ENCODE measurements at regions of chrX and their contacts with region 1.

Region 1: DNA sequence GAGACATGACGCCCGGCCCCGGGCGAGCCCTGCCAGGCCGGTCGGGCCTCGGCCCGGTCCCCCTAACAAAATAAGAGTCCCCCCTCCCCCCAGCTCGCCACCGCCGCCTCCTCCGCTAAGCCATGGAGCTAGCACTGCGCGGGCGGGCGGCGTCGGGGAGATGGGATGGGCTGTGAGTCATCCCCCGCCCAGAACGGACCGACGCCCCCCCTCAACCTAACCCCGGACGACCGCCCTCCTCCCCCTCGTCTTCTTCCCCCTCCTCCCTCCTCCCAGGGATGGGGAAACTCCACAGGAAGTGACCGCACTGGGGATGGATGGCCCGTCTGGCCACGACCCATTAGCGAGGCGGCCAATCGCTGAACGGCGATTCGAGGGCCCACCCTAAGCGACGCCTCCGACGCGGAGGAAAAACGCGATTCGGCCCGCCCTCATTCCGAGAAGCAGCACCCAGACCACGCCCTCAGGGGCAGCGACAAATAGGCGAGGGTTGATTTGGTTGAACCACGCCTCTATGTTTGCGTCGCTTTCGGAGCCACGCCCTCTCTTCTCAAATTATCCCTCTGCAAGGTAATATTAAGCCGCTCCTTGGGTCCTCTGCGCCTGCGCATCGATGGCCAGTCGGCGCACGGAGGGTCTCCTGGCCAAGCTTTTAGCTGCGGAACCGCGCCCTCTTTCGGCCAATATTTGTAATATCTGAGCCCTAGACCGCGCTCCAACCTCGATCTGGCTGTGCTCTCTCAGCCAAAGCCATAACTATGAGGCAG is at the start of gene TFE3:
- DNase-seq: peak; percentile 98
- H3K4me3 Mint-ChIP-seq: peak within 1 kb of the TSS; percentile 79
- H3K27ac Mint-ChIP-seq: peak within 1 kb of the TSS; percentile 91
- H3K4me1 Mint-ChIP-seq: peaks cover 8% of the 10 kb centered on the region
- H3K27me3 Mint-ChIP-seq: no peaks in the 10 kb centered on the region
- CTCF ChIP-seq: peak; percentile 37
- total RNA-seq, gene TFE3: 45.3 and 71.7 TPM in 2 replicates

Region 2: DNA sequence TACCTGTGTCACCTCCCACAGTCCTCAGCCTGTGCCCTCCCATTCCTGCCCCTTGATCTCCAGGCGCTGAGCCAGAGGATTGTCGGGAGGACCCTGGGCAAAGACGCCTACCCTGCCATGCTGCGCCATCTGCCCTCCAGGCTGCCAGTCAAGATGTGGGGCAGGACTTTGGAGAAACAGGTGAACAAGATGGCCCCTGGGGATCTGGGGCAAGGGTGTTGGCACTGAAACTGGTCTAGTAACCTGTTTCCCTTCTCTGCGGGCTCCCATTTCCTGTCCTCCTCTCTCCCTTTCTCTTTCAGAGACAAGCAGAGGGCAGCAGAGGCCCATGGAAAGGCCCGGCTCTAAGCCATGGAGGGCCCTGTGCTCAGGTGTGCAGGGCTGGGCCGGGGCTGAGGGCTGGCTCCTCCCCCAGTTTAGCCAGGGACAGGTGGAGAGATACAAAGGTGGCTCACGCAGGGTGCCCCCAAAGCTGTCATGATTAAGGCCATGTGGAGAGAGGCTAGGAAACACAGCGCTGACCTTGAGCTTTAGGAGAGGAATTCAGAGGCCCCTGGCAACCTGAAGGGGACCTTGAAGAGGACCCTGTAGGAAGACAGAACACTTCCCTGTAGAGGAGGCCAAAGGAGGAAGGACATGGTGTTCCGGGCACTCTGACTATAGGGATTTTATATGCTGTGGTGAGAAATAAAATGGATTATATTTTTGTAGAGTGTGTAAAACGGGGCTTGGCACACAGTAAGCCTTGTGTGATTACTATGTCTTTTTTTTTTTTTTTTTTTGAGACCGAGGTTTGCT is 281.5 kb before region 1 on chrX and contains the start of gene GLOD5:
- CTCF ChIA-PET with region 1: no interaction called
- POLR2A ChIA-PET with region 1: no interaction called
- intact Hi-C with region 1: loop called (anchors 2 kb)
- DNase-seq: peak; percentile 69
- H3K4me3 Mint-ChIP-seq: no peak within 1 kb of the TSS
- H3K27ac Mint-ChIP-seq: peak within 1 kb of the TSS; percentile 65
- H3K4me1 Mint-ChIP-seq: no peaks in the 10 kb centered on the region
- H3K27me3 Mint-ChIP-seq: peaks cover 11% of the 10 kb centered on the region
- CTCF ChIP-seq: peak; percentile 17
- total RNA-seq, gene GLOD5: not detected in 2 replicates

Region 3: DNA sequence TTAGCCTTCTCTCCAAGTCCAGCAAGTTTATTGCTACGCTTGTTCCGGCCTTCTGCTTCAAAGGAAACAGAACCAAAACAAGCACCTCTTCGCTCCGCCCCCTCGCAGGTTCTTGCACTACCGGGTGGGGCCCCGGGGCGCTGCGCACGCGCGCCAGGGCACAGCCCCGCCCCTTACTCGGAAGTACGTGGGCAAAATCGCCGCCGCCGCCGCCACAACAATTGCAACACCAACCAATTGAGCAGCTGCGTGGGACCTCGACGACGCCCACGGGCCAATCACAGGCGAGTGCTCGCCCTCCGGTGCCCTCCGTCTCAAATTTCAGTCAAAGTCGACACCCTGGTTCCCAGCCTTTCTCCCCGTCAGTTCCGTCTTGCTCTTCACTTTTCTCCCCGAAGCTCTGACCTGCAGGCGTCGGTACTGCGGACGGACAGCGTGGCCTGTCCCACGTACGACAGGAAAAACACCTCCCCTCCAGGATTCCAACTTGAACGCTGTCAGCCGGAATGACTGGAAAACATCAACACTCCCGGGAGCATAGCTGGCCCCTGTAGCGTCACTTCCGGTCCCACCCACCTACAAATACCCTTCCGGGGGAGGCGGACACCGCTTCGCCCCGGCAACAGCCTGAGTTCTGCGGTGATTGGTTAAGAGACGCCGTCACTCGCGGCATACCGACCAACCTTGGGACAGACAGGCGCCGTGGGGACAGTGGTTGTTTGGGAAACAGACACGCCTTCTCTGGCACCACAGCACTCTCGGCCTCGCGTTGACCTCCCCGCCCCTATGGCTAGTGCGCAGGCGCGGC is 85.4 kb before region 1 on chrX:
- CTCF ChIA-PET with region 1: interaction called, 15 read pairs
- POLR2A ChIA-PET with region 1: interaction called, 57 read pairs
- intact Hi-C with region 1: loop called (anchors 1 kb)
- DNase-seq: peak; percentile 94
- H3K4me3 Mint-ChIP-seq: peak overlapping the region; percentile 94
- H3K27ac Mint-ChIP-seq: peak overlapping the region; percentile 100
- H3K4me1 Mint-ChIP-seq: peaks cover 5% of the 10 kb centered on the region
- H3K27me3 Mint-ChIP-seq: no peaks in the 10 kb centered on the region
- CTCF ChIP-seq: no peak

Region 4: GRCh38 chrX:49002091-49002935 is 41.1 kb before region 1 on chrX and contains the start of gene GRIPAP1:
- CTCF ChIA-PET with region 1: interaction called, 3 read pairs
- POLR2A ChIA-PET with region 1: interaction called, 31 read pairs
- intact Hi-C with region 1: loop called (anchors 1 kb)
- DNase-seq: peak; percentile 80
- H3K4me3 Mint-ChIP-seq: peak within 1 kb of the TSS; percentile 95
- H3K27ac Mint-ChIP-seq: peak within 1 kb of the TSS; percentile 97
- H3K4me1 Mint-ChIP-seq: peaks cover 10% of the 10 kb centered on the region
- H3K27me3 Mint-ChIP-seq: no peaks in the 10 kb centered on the region
- CTCF ChIP-seq: no peak
- total RNA-seq, gene GRIPAP1: 49.6 and 51.0 TPM in 2 replicates

Region 5: DNA sequence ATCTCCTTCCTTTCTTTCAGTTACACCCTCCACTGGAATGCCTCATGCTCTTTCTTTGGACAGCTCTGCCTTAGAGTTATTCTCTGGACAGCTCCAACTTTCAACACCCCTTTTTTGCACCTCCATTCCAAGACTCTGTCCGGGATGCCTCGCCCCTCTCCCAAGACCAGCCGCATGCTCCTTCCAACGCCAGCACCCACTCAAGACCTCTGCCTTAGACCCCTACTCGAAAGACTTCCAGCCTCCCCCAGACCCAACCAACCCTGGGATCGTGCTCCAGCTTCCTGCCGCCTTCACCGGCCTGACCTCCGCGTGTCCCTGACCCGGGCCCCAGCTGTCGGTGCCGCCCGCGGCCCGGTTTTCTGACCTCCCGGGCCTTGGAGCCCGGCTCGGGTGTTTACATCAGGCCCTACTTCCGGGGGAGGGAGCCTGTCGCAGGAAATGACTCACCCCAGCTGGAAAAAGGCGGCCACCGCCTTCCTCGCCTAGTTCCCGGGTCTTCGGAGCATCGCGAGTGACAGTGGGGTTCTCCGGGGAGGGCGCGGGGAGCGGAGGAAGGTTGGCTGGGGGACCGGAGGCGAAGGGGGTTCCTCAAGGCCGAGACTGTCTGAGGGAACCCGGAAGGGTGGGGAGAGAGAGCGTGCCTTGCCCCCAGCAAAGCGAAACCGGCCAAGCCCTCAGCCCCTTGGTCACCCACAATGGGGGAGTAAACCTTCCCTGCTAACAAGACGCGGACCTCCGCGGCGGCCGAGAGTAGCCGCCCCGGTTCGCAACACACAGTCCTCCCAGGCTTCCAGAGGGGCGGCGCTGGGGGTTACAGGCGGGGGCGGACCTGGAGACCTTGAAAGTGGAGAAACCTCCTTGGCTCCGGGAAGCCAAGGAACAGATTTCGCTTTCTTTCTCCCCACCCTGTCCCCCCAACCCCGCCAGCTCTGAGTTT is 36.4 kb after region 1 on chrX and contains the start of gene WDR45:
- CTCF ChIA-PET with region 1: interaction called, 3 read pairs
- POLR2A ChIA-PET with region 1: interaction called, 14 read pairs
- intact Hi-C with region 1: no loop called
- DNase-seq: peak; percentile 68
- H3K4me3 Mint-ChIP-seq: peak within 1 kb of the TSS; percentile 86
- H3K27ac Mint-ChIP-seq: peak within 1 kb of the TSS; percentile 88
- H3K4me1 Mint-ChIP-seq: peaks cover 5% of the 10 kb centered on the region
- H3K27me3 Mint-ChIP-seq: no peaks in the 10 kb centered on the region
- CTCF ChIP-seq: no peak
- total RNA-seq, gene WDR45: 93.0 and 96.9 TPM in 2 replicates